Activated CD4-positive, alpha-beta T cell treated with anti-CD3 and anti-CD28 coated beads, Interleukin-2, amount 10 ng/mL, durations not matched to agents 24 days and 14 days (primary cell): ENCODE measurements at regions of chr12 and their contacts with region 1.

Region 1: GRCh38 chr12:14629832-14630710 is 62.4 kb upstream of the PLBD1 start:
- DNase-seq: peak; percentile 90
- H3K4me3 Mint-ChIP-seq: no peak overlapping the region
- H3K27ac Mint-ChIP-seq: no peak overlapping the region
- H3K4me1 Mint-ChIP-seq: no peaks in the 10 kb centered on the region
- H3K27me3 Mint-ChIP-seq: peaks cover 23% of the 10 kb centered on the region

Region 2: GRCh38 chr12:14664510-14664909 is 34.4 kb after region 1 on chr12:
- intact Hi-C with region 1: loop called (anchors 1 kb)
- DNase-seq: peak; percentile 81
- H3K4me3 Mint-ChIP-seq: no peak overlapping the region
- H3K27ac Mint-ChIP-seq: no peak overlapping the region
- H3K4me1 Mint-ChIP-seq: peaks cover 6% of the 10 kb centered on the region
- H3K27me3 Mint-ChIP-seq: peaks cover 12% of the 10 kb centered on the region

Region 3: DNA sequence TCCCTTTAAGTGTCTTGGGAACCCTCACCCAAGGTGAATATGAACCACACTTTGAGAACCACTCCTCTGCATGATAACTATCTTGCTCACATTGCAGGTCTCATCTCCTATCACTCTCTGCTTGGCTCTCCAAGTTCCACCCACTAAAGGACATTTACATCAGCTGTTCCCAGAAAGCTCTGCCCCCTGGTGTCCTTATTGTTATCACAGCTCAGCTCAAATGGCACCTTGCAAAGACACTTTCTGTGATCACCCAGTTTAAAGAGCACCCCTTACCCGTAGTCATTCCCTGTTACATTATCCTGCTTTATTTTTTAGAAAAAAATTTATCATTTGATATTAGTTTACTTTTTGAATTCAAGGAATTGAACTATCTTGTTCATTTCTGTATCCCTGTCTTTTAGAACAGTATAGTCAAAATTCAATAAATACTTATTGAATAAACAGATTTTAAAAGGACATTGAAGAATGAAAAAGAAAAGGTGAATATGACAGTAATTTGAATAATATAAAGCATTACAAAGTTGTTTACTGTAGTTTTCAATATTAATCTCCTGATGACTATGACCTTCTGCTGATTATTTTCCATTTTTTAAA is 86.9 kb after region 1 on chr12:
- intact Hi-C with region 1: loop called (anchors 1 kb)
- DNase-seq: peak; percentile 86
- H3K4me3 Mint-ChIP-seq: no peak overlapping the region
- H3K27ac Mint-ChIP-seq: no peak overlapping the region
- H3K4me1 Mint-ChIP-seq: peaks cover 3% of the 10 kb centered on the region
- H3K27me3 Mint-ChIP-seq: peaks cover 22% of the 10 kb centered on the region

Region 4: DNA sequence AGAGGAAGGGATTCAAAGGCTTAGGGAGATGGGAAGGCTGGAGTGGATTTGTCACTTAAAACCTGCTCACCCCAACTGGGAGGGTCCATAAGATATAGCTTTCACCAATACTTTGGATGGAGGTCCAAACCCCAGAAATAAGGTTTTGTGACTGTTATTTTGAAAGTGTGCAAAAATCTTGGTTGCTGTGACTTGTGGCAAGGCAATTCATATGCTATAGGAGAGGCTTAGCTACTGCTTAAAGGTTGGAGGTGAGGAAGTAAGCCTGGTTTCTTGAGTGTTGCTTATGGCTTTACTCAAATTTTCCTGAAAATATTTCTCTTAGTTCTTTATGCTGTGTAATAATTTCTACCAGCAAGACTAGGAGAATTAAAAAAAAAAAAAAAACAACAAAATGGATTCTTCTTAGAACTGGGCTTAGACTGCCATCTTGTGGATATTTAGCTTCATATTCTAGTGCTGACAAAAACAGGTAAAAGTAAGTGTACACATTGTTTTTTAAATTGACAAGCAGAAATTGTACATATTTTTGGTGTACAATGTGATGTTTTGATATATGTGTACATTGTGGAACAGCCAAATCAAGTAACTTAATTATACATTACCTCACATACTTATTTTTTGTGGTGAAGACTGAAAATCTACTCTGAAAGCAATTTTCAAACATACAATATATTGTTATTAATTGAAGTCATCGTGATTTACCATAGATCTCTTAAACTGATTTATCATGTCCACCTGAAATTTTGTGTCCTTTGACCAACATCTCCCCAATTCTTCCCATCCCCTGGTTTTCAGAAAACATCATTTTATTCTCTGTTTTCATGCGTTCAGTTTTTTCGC is 365.7 kb after region 1 on chr12:
- intact Hi-C with region 1: loop called (anchors 5 kb)
- DNase-seq: peak; percentile 64
- H3K4me3 Mint-ChIP-seq: no peak overlapping the region
- H3K27ac Mint-ChIP-seq: no peak overlapping the region
- H3K4me1 Mint-ChIP-seq: peaks cover 20% of the 10 kb centered on the region
- H3K27me3 Mint-ChIP-seq: peaks cover 24% of the 10 kb centered on the region